ENCODE measurements at regions of chr2 and their contacts with region 1.

Region 1: DNA sequence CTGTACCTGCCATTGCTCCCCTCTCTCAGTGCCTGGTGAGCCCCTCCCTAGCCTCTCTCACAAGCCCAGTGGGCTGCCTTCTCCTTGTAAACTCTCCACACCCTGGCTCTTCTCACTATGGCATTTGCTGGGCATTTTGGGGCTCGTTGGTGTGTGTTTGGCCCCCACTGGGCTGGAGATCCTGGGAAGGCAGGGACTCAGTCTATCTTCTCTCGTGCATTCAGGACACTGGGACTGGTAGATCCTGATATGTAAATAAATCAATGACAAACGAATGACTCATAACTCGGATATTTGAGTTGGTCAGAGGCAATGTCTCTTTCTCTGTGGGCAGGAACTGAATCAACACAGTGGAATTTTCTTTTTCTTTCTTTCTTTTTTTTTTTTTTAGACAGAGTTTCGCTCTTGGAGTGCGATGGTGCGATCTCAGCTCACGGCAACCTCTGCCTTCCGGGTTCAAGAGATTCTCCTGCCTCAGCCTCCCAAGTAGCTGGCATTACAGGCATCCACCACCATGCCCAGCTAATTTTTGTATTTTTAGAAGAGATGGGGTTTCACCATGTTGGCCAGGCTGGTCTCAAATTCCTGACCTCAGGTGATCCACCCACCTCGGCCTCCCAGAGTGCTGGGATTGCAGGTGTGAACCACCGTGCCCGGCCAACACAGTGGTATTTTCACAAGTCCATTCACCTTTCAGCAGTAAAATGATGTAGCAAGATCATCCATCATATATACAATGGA is 144.6 kb upstream of the SPRED2 start:
- DNase-seq: peak; percentile 95
- ATAC-seq: peak; percentile 86
- H3K4me3 ChIP-seq: no peak overlapping the region
- H3K27ac ChIP-seq: peak overlapping the region; percentile 91
- H3K4me1 ChIP-seq: peaks cover 9% of the 10 kb centered on the region
- H3K27me3 ChIP-seq: no peaks in the 10 kb centered on the region
- CTCF ChIP-seq: no peak
- POLR2A ChIP-seq: no peak
- RAD21 ChIP-seq: no peak

Region 2: GRCh38 chr2:64595397-64596160 is 981.5 kb before region 1 on chr2:
- CTCF ChIA-PET with region 1: no interaction called
- POLR2A ChIA-PET with region 1: no interaction called
- dilution Hi-C with region 1: no loop called
- in situ Hi-C with region 1: loop called (anchors 10 kb)
- intact Hi-C with region 1: no loop called
- DNase-seq: peak; percentile 17
- ATAC-seq: no peak; the same call in 1 of the 2 replicates
- H3K4me3 ChIP-seq: no peak overlapping the region
- H3K27ac ChIP-seq: no peak overlapping the region
- H3K4me1 ChIP-seq: peaks cover 6% of the 10 kb centered on the region
- H3K27me3 ChIP-seq: peaks cover 36% of the 10 kb centered on the region
- CTCF ChIP-seq: peak; percentile 49
- POLR2A ChIP-seq: no peak
- RAD21 ChIP-seq: peak; percentile 39

Region 3: DNA sequence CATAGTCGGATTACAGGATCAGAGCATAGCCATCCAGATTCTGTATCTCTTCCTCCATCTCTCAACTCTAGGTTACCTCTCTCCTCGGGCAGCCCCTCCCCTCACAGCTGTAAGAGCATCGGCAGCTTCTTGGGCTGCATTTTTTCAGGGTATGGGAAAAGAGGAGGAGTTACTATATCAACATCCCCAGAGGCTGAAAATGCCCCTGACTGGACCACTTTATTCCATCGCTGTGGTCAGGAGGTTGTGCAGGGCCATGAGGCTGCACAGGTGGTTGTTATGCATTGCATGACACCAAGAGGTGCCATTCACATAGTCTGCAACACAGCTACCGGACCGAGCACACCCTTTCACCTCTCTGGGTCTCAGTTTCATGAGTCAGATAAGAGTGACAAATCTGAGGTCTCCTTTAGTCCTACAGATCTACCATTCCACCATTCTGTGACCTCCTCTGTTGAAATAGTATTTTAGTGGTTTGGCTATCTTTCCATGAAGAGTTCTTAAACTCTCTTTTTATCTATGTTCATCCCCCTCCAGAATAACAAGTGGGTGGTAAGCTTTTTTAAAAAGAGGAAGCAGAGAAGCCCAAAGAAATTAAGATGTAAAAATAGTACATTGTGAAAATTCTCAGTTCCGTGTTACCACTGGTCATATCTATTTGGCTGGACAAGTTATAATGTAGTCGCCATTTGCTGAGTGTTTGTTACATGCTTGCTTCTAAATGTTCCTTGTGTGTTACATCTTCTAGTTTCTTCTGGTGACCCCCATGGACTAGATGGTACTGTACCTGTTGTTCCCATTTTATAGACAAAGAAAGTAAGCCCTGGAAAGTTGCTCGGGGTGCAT is 644.4 kb before region 1 on chr2:
- CTCF ChIA-PET with region 1: no interaction called
- POLR2A ChIA-PET with region 1: no interaction called
- dilution Hi-C with region 1: no loop called
- in situ Hi-C with region 1: loop called (anchors 10 kb)
- intact Hi-C with region 1: no loop called
- DNase-seq: no peak
- ATAC-seq: no peak
- H3K4me3 ChIP-seq: no peak overlapping the region
- H3K27ac ChIP-seq: no peak overlapping the region
- H3K4me1 ChIP-seq: no peaks in the 10 kb centered on the region
- H3K27me3 ChIP-seq: peaks cover 60% of the 10 kb centered on the region
- CTCF ChIP-seq: no peak
- POLR2A ChIP-seq: no peak
- RAD21 ChIP-seq: no peak

Region 4: DNA sequence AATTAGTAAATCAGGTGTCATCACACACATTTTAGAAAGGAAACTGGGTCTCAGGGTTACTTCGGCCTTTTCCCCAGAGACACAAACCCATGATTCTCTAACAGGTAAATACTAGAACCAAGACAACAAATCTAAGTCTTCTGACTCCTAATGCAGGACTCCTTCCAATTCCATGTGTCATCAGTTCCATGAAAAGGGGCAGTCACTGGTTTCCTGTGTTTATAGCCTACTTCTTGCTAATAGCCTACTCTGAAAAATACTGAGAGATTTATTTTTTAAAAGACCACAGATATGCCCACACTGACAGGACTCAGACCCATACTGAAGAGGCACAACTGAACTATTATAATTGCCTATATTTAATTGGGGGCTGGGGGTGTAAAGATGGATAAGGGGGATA is 480.1 kb before region 1 on chr2:
- CTCF ChIA-PET with region 1: no interaction called
- POLR2A ChIA-PET with region 1: no interaction called
- dilution Hi-C with region 1: no loop called
- in situ Hi-C with region 1: no loop called
- intact Hi-C with region 1: loop called (anchors 10 kb)
- DNase-seq: peak; percentile 65
- ATAC-seq: peak; percentile 61
- H3K4me3 ChIP-seq: no peak overlapping the region
- H3K27ac ChIP-seq: no peak overlapping the region
- H3K4me1 ChIP-seq: no peaks in the 10 kb centered on the region; the same call in 1 of the 2 replicates
- H3K27me3 ChIP-seq: no peaks in the 10 kb centered on the region
- CTCF ChIP-seq: no peak
- POLR2A ChIP-seq: no peak
- RAD21 ChIP-seq: no peak

Region 5: GRCh38 chr2:65264821-65265670 is 312.0 kb before region 1 on chr2:
- CTCF ChIA-PET with region 1: interaction called, 5 read pairs
- POLR2A ChIA-PET with region 1: no interaction called
- dilution Hi-C with region 1: no loop called
- in situ Hi-C with region 1: no loop called
- intact Hi-C with region 1: loop called (anchors 1 kb)
- DNase-seq: peak; percentile 91
- ATAC-seq: peak; percentile 83
- H3K4me3 ChIP-seq: no peak overlapping the region
- H3K27ac ChIP-seq: no peak overlapping the region
- H3K4me1 ChIP-seq: peaks cover 8% of the 10 kb centered on the region
- H3K27me3 ChIP-seq: no peaks in the 10 kb centered on the region
- CTCF ChIP-seq: peak; percentile 77
- POLR2A ChIP-seq: 0 out of 2 replicates have a peak, but pooled peaks have one; percentile 28
- RAD21 ChIP-seq: peak; percentile 87

Region 6: DNA sequence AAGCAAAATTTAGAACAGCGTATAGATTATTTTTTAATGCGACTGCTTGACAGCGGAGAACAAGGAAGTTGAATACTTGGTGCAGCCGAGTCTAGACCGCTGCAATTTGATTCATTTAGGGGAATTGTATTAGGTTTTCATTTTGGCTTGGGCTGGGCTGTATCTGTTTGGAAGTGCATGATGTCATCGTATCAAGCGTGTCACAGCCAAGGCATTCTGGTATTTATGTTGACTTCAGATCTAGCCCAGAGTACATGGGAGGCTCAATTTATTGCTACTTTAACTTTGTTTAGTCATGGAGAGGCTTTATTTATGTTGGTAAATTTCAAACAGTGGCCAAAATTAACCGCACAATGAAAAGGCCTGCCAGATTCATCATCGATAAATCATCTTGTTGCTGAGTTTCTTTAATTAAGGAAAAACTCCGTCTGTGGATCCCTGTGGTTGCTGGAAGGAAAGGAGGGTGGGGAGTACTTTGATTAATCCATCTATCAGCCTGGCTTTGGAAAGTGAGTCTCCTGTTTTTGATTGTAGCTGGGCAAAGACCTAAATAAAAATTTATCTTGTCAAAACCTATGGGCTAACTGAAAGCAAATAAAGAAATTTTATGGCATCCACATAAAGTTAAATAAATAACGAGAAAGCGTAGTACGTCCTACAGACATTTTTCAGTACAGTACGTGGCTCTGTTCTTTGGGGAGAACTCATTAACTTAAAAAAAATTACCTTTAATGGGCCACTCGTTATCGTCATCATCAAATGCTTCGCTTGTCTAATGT is 85.8 kb after region 1 on chr2:
- CTCF ChIA-PET with region 1: no interaction called
- POLR2A ChIA-PET with region 1: no interaction called
- dilution Hi-C with region 1: no loop called
- in situ Hi-C with region 1: no loop called
- intact Hi-C with region 1: loop called (anchors 2 kb)
- DNase-seq: peak; percentile 93
- ATAC-seq: peak; percentile 91
- H3K4me3 ChIP-seq: no peak overlapping the region
- H3K27ac ChIP-seq: no peak overlapping the region
- H3K4me1 ChIP-seq: peaks cover 20% of the 10 kb centered on the region
- H3K27me3 ChIP-seq: peaks cover 4% of the 10 kb centered on the region
- CTCF ChIP-seq: no peak
- POLR2A ChIP-seq: no peak
- RAD21 ChIP-seq: no peak

Region 7: DNA sequence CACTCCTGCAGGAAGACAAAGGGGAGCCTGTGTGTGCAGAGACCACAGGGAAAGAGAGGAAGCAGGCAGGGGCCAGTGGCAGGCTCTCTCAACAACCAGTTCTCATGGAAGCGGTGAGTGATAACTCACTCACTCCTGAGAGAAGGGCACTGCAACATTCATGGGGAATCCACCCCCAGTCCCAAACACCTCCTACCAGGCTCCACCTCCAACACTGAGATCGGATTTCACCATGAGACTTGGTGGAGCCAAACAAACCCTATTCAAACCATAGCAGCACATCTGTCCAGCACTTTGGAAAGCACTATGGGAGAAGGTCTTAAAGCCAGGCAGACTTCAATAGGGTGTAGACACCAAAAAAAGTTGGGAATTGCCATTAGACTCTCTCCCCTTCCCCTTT is 201.1 kb after region 1 on chr2:
- CTCF ChIA-PET with region 1: no interaction called
- POLR2A ChIA-PET with region 1: no interaction called
- dilution Hi-C with region 1: no loop called
- in situ Hi-C with region 1: no loop called
- intact Hi-C with region 1: no loop called
- DNase-seq: no peak
- ATAC-seq: no peak
- H3K4me3 ChIP-seq: no peak overlapping the region
- H3K27ac ChIP-seq: no peak overlapping the region
- H3K4me1 ChIP-seq: no peaks in the 10 kb centered on the region
- H3K27me3 ChIP-seq: peaks cover 2% of the 10 kb centered on the region
- CTCF ChIP-seq: no peak
- POLR2A ChIP-seq: no peak
- RAD21 ChIP-seq: no peak